Activated CD4-positive, alpha-beta T cell treated with anti-CD3 and anti-CD28 coated beads, Interleukin-2, amount 10 ng/mL, durations not matched to agents 24 days and 14 days (primary cell): ENCODE measurements at regions of chr14 and their contacts with region 1.

Region 1: GRCh38 chr14:31026395-31027118 is 378 bp upstream of the STRN3 start:
- DNase-seq: peak; percentile 98
- H3K4me3 Mint-ChIP-seq: peak overlapping the region; percentile 92
- H3K27ac Mint-ChIP-seq: peak overlapping the region; percentile 93
- H3K4me1 Mint-ChIP-seq: peaks cover 52% of the 10 kb centered on the region
- H3K27me3 Mint-ChIP-seq: no peaks in the 10 kb centered on the region

Region 2: DNA sequence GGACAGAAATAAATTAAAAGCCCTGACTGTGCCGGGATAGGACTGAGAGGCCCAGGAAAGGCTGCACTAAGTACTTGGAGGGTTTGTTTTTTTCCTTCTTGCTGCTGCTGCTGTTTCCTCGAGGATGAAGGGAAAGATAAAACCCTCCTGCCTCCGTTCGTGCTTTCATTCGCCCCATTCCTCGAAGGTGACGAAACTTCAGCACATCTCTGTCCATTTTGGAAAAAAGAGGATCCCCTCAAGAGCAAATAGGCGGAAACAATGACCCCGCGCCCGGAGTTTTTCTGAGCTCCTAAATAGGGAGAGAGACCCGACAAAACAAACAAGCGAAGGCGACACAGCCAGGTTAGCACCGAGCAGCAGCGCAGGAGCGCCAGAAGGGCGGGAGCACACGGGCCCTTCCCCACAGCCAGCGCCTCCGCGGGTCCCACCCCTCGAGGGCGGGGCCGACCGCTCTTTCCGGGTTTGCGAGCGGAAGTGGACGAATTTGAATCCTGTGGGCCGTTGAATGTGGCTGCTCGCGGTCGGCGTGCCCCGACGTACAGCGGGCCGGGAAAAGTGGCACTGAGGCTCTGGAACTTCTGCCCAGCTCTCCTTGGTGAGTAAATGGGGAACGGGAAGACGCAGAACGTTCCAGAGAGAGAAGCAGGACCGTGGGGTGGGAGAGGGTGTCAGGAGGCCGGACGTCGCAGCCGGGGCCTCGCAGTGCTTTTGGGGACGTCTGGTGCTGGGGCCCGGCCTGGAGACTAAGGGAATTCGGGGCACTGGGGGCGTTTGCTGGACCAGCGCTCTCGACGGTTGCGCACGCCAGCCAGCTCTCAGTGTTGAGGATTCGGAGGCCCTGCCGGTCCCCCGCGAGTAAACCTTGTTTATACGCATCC is 467.6 kb before region 1 on chr14 and contains the start of gene G2E3:
- intact Hi-C with region 1: loop called (anchors 5 kb)
- DNase-seq: peak; percentile 98
- H3K4me3 Mint-ChIP-seq: peak within 1 kb of the TSS; percentile 99
- H3K27ac Mint-ChIP-seq: peak within 1 kb of the TSS; percentile 100
- H3K4me1 Mint-ChIP-seq: peaks cover 22% of the 10 kb centered on the region
- H3K27me3 Mint-ChIP-seq: peaks cover 2% of the 10 kb centered on the region
- total RNA-seq, gene G2E3: 22.4 and 23.8 TPM in 2 replicates

Region 3: DNA sequence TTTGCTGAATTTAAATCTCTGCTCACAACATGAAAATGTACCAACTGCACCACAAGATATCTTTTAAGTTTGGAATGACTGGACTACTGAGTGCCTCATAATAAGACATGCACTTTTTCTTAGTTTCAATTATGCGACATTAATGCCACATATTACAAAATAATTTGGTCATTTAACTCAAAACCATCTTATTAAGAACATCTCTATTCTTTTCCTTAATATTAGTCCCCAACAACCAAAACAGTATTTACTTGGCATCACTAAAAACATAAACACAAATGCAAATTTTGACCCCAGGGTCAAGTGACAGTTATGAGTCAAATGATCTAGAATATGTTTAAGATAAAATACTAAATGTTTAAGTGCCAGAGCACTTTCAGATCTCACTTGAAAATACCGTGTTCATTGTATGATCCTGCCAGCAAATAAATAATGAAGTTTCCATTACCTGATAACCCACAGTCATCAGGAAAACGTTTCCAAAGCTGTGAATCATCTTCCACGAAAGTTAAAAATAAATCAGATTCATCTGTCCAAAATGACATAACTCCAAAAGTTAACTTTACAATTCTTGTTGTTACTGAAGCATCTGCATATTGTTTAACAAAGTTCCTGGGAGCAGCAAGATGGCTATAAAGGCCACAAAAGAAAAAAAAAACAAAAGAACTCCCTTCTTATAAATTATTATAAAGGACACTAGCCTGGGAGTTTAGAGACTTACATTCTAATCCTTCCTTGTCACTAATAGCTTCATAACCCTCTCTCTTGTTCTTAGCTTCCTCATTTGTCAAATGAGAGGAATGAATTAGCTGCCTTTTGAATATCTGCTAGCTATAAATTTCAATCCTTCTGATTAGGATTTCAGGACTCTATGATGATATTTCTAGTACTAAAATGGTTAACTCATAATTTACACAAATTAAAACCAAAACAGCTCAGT is 31.6 kb before region 1 on chr14:
- intact Hi-C with region 1: loop called (anchors 1 kb)
- DNase-seq: no peak
- H3K4me3 Mint-ChIP-seq: peak overlapping the region; percentile 15
- H3K27ac Mint-ChIP-seq: peak overlapping the region; percentile 62
- H3K4me1 Mint-ChIP-seq: peaks cover 20% of the 10 kb centered on the region
- H3K27me3 Mint-ChIP-seq: no peaks in the 10 kb centered on the region

Region 4: GRCh38 chr14:31059152-31059924 is 32.8 kb after region 1 on chr14:
- intact Hi-C with region 1: no loop called
- DNase-seq: no peak
- H3K4me3 Mint-ChIP-seq: no peak overlapping the region
- H3K27ac Mint-ChIP-seq: no peak overlapping the region
- H3K4me1 Mint-ChIP-seq: peaks cover 3% of the 10 kb centered on the region
- H3K27me3 Mint-ChIP-seq: no peaks in the 10 kb centered on the region

Region 5: DNA sequence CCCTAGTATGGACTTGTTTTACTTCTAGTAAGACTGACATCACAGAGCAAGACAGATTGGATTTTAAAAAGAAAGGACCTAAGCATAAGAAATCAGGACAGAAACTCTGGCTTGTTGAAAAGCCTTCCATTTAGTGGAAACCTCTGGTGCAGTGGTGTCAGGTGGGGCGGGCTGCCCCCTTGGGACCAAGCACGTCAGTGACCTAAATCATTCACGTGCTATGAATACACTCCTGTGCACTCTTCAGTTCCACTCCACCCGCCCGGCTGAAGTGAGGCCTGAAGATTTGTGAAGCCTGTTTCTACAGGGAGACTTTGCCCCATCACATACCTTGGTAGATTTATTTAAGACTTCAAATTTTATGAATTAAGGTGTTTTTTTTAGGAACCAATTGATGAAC is 57.8 kb after region 1 on chr14:
- intact Hi-C with region 1: loop called (anchors 5 kb)
- DNase-seq: no peak
- H3K4me3 Mint-ChIP-seq: no peak overlapping the region
- H3K27ac Mint-ChIP-seq: no peak overlapping the region
- H3K4me1 Mint-ChIP-seq: no peaks in the 10 kb centered on the region
- H3K27me3 Mint-ChIP-seq: no peaks in the 10 kb centered on the region

Region 6: DNA sequence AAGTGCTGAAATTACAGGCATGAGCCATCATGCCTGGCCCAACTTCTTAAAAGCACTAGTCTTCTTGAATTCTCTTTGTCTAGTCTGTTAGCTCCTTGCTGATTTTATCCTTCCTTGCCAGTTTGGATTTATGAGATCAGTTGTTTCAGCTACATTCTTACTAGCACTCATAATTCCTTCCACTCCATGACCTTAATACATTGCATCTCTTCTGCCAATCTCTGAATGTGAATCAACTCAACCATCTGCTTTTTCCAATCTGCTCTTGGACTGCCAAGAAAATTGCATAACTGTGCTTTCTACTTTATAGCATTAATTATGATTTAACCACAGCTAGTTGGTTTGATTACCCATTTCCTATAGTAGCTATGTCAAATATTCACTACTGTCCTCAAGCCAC is 408.7 kb after region 1 on chr14:
- intact Hi-C with region 1: no loop called
- DNase-seq: no peak
- H3K4me3 Mint-ChIP-seq: no peak overlapping the region
- H3K27ac Mint-ChIP-seq: no peak overlapping the region
- H3K4me1 Mint-ChIP-seq: peaks cover 4% of the 10 kb centered on the region
- H3K27me3 Mint-ChIP-seq: no peaks in the 10 kb centered on the region

Region 7: DNA sequence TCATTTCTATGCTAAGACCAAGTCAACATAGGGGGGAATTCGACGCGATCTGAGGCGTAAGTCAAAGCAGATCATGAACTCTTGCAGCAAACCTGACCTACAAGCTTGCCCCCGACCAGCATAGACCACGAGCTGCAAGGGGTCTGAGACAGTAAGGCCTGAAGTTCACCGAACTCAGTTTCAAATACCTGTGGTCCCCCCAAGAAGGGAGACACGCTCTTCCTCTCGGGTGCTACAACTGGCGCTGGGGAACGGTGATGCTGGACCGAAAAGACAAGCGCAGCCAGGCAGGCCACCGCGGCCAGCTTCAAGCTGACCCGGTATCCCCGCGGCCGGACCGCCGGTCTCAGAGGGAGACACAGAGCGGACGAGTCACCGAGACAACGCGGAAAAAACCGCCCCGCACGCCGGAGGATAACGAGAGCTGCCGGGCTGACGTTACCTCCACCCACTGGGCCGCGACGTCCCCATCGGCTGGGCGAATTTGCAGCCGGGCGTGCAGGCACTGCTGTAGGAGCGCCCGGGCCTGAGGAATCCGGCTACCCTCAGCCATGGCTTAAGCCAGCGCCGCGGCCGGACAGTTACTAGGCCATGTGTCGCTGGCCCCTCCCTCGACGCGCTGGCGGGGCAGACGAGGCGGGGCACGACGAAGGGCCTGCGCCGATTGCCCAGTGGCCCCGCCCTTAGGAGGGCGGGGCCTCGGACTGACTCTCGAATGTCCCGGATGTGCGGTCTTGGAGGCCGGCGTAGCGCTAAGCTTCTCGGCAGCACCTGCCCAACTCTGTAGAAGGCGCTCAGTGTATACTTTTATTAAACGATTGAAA is 430.5 kb after region 1 on chr14 and contains the start of gene DTD2:
- intact Hi-C with region 1: loop called (anchors 2 kb)
- DNase-seq: peak; percentile 97
- H3K4me3 Mint-ChIP-seq: peak within 1 kb of the TSS; percentile 95
- H3K27ac Mint-ChIP-seq: peak within 1 kb of the TSS; percentile 98
- H3K4me1 Mint-ChIP-seq: peaks cover 24% of the 10 kb centered on the region
- H3K27me3 Mint-ChIP-seq: peaks cover 4% of the 10 kb centered on the region
- total RNA-seq, gene DTD2: 30.8 and 32.2 TPM in 2 replicates

Region 8: GRCh38 chr14:31561155-31561846 is 534.7 kb after region 1 on chr14 and contains the start of gene NUBPL:
- intact Hi-C with region 1: loop called (anchors 5 kb)
- DNase-seq: peak; percentile 99
- H3K4me3 Mint-ChIP-seq: peak within 1 kb of the TSS; percentile 95
- H3K27ac Mint-ChIP-seq: peak within 1 kb of the TSS; percentile 97
- H3K4me1 Mint-ChIP-seq: peaks cover 16% of the 10 kb centered on the region
- H3K27me3 Mint-ChIP-seq: peaks cover 12% of the 10 kb centered on the region
- total RNA-seq, gene NUBPL: 12.1 and 12.3 TPM in 2 replicates